B cell (primary cell): ENCODE measurements at regions of chr20 and their contacts with region 1.

Region 1: GRCh38 chr20:34302723-34303528 is at the start of gene AHCY:
- DNase-seq: peak; percentile 96
- ATAC-seq: peak; percentile 92
- H3K4me3 ChIP-seq: peak within 1 kb of the TSS; percentile 65 to 93 (median 85)
- H3K4me3 Mint-ChIP-seq: peak within 1 kb of the TSS; percentile 97
- H3K27ac ChIP-seq: peak within 1 kb of the TSS; percentile 75 to 87
- H3K27ac Mint-ChIP-seq: peak within 1 kb of the TSS; percentile 95
- H3K4me1 ChIP-seq: peaks cover 4 to 18% of the 10 kb centered on the region in 2 donors
- H3K4me1 Mint-ChIP-seq: peaks cover 19% of the 10 kb centered on the region
- H3K27me3 ChIP-seq: no peaks in the 10 kb centered on the region
- H3K27me3 Mint-ChIP-seq: no peaks in the 10 kb centered on the region
- CTCF ChIP-seq: peak; percentile 13
- total RNA-seq, gene AHCY: 43.6 and 43.8 TPM in 2 replicates

Region 2: DNA sequence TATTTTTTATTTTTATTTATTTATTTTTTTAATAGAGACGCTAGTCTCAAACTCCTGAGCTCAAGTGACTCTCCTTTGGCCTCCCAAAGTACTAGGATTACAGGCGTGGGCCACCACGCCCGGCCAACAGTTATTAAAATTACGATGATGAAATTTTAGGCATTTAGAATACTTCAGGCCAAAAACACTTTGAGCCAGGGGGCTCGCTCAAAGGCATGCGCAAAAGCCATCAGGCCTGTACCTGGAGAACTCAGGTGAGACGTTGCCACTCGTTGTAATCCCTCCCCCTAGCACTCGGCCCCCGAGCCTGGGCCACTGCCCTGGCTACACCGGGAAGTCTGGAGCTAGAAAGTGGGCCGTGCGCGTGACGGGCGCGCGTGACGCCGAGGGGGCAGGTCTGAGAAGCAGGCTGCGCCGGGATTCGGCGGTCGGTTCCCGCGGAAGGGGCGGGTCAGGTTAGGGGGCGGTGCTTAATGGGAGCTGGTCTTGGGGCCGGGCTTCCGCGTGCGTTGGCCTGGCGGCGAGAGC is 813.4 kb before region 1 on chr20:
- CTCF ChIA-PET with region 1: no interaction called
- POLR2A ChIA-PET with region 1: no interaction called
- intact Hi-C with region 1: loop called (anchors 5 kb)
- DNase-seq: peak; percentile 99
- ATAC-seq: peak; percentile 97
- H3K4me3 ChIP-seq: peak overlapping the region; percentile 24 to 73 (median 68)
- H3K4me3 Mint-ChIP-seq: peak overlapping the region; percentile 93
- H3K27ac ChIP-seq: peak overlapping the region; percentile 97 to 99
- H3K27ac Mint-ChIP-seq: peak overlapping the region; percentile 95
- H3K4me1 ChIP-seq: peaks cover 9 to 19% of the 10 kb centered on the region in 2 donors
- H3K4me1 Mint-ChIP-seq: peaks cover 16% of the 10 kb centered on the region
- H3K27me3 ChIP-seq: no peaks in the 10 kb centered on the region
- H3K27me3 Mint-ChIP-seq: no peaks in the 10 kb centered on the region
- CTCF ChIP-seq: no peak

Region 3: DNA sequence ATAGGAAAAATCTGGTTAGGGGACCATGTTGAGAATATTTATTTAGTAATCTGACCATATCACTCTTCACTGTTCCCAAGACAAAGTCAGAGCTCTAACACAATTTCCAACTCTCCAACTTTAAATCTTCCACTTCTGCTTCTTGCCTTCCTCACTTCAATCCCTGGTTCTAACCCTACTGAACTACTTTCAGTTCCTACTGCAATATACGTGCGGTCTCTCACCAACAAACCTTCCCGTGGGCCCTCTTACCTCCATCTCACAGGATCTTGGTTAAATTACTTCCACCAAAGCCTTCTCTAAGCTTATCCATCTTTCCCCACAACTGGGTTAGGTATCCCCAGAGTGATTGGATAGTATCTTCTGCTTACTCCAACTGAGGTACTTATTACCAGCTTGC is 198.9 kb before region 1 on chr20:
- CTCF ChIA-PET with region 1: no interaction called
- POLR2A ChIA-PET with region 1: no interaction called
- intact Hi-C with region 1: no loop called
- DNase-seq: no peak
- ATAC-seq: no peak
- H3K4me3 ChIP-seq: no peak overlapping the region
- H3K4me3 Mint-ChIP-seq: no peak overlapping the region
- H3K27ac ChIP-seq: peak overlapping the region in 1 of 2 donors; percentile 34
- H3K27ac Mint-ChIP-seq: no peak overlapping the region
- H3K4me1 ChIP-seq: peaks cover 6 to 14% of the 10 kb centered on the region in 2 donors
- H3K4me1 Mint-ChIP-seq: peaks cover 35% of the 10 kb centered on the region
- H3K27me3 ChIP-seq: no peaks in the 10 kb centered on the region
- H3K27me3 Mint-ChIP-seq: no peaks in the 10 kb centered on the region
- CTCF ChIP-seq: no peak

Region 4: GRCh38 chr20:34324541-34324940 is 21.6 kb after region 1 on chr20:
- CTCF ChIA-PET with region 1: no interaction called
- POLR2A ChIA-PET with region 1: no interaction called
- intact Hi-C with region 1: no loop called
- DNase-seq: no peak
- ATAC-seq: no peak
- H3K4me3 ChIP-seq: no peak overlapping the region
- H3K4me3 Mint-ChIP-seq: no peak overlapping the region
- H3K27ac ChIP-seq: no peak overlapping the region
- H3K27ac Mint-ChIP-seq: no peak overlapping the region
- H3K4me1 ChIP-seq: no peaks in the 10 kb centered on the region
- H3K4me1 Mint-ChIP-seq: no peaks in the 10 kb centered on the region
- H3K27me3 ChIP-seq: peaks cover 0 to 3% (median 1%) of the 10 kb centered on the region in 4 experiments
- H3K27me3 Mint-ChIP-seq: peaks cover 14% of the 10 kb centered on the region
- CTCF ChIP-seq: no peak

Region 5: GRCh38 chr20:34363062-34363464 is 60.1 kb after region 1 on chr20 and contains the start of gene ITCH:
- CTCF ChIA-PET with region 1: no interaction called
- POLR2A ChIA-PET with region 1: no interaction called
- intact Hi-C with region 1: loop called (anchors 1 kb)
- DNase-seq: peak; percentile 94
- ATAC-seq: peak; percentile 96
- H3K4me3 ChIP-seq: peak within 1 kb of the TSS; percentile 46 to 91 (median 88)
- H3K4me3 Mint-ChIP-seq: peak within 1 kb of the TSS; percentile 97
- H3K27ac ChIP-seq: peak within 1 kb of the TSS; percentile 81 to 96
- H3K27ac Mint-ChIP-seq: peak within 1 kb of the TSS; percentile 98
- H3K4me1 ChIP-seq: peaks cover 34 to 38% of the 10 kb centered on the region in 2 donors
- H3K4me1 Mint-ChIP-seq: peaks cover 35% of the 10 kb centered on the region
- H3K27me3 ChIP-seq: no peaks in the 10 kb centered on the region
- H3K27me3 Mint-ChIP-seq: no peaks in the 10 kb centered on the region
- CTCF ChIP-seq: no peak
- total RNA-seq, gene ITCH: 89.6 and 110 TPM in 2 replicates

Region 6: DNA sequence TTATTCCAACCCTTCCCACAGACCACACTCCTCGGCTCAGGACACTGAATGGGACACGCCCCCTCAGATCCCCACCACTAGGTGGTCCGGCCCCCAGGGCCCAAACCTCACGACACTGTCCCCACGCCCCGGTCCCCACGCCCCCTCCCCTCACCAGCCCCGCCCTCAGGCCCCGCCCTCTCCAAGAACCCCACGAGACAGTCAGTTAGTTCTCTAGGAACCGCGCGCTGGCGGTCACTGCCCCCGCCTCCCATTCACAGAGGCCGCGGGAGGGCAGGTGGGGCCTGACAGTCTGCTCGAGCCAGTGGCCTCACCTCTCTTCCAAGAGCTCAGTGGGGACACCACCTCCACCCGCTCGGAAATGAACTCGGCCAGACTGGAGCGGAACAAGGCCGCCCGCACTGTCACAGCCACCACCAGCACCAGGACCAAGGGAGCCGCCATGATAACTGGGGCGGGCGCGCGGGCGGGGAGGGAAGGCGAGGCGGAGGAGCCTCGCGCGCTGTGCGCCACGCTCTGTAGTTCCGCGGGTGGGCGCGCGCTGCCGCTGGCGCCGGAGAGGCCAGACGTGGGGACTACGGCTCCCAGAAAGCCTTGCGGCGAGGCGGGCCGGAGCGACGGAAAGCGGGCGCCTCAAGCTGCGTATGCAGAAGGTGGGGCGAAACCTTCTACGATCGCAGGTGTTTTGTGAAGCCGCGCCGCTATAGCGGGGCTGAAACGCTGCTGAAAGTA is 373.9 kb after region 1 on chr20 and contains the start of gene PIGU:
- CTCF ChIA-PET with region 1: no interaction called
- POLR2A ChIA-PET with region 1: no interaction called
- intact Hi-C with region 1: loop called (anchors 1 kb)
- DNase-seq: peak; percentile 98
- ATAC-seq: peak; percentile 93
- H3K4me3 ChIP-seq: peak within 1 kb of the TSS; percentile 74 to 96 (median 78)
- H3K4me3 Mint-ChIP-seq: peak within 1 kb of the TSS; percentile 98
- H3K27ac ChIP-seq: peak within 1 kb of the TSS; percentile 74 to 86
- H3K27ac Mint-ChIP-seq: peak within 1 kb of the TSS; percentile 95
- H3K4me1 ChIP-seq: peaks cover 11 to 12% of the 10 kb centered on the region in 2 donors
- H3K4me1 Mint-ChIP-seq: peaks cover 17% of the 10 kb centered on the region
- H3K27me3 ChIP-seq: no peaks in the 10 kb centered on the region
- H3K27me3 Mint-ChIP-seq: no peaks in the 10 kb centered on the region
- CTCF ChIP-seq: no peak
- total RNA-seq, gene PIGU: 15.4 and 19.3 TPM in 2 replicates

Region 7: GRCh38 chr20:34825530-34826362 is 522.8 kb after region 1 on chr20 and contains the start of gene NCOA6:
- CTCF ChIA-PET with region 1: no interaction called
- POLR2A ChIA-PET with region 1: no interaction called
- intact Hi-C with region 1: loop called (anchors 2 kb)
- DNase-seq: peak; percentile 88
- ATAC-seq: peak; percentile 74
- H3K4me3 ChIP-seq: peak within 1 kb of the TSS; percentile 68 to 94 (median 82)
- H3K4me3 Mint-ChIP-seq: peak within 1 kb of the TSS; percentile 94
- H3K27ac ChIP-seq: peak within 1 kb of the TSS; percentile 60 to 67
- H3K27ac Mint-ChIP-seq: peak within 1 kb of the TSS; percentile 92
- H3K4me1 ChIP-seq: peaks cover 19 to 21% of the 10 kb centered on the region in 2 donors
- H3K4me1 Mint-ChIP-seq: peaks cover 31% of the 10 kb centered on the region
- H3K27me3 ChIP-seq: no peaks in the 10 kb centered on the region
- H3K27me3 Mint-ChIP-seq: peaks cover 3% of the 10 kb centered on the region
- CTCF ChIP-seq: no peak
- total RNA-seq, gene NCOA6: 31.0 and 31.9 TPM in 2 replicates

Region 8: GRCh38 chr20:35284267-35284991 is 981.5 kb after region 1 on chr20 and contains the start of gene EIF6:
- CTCF ChIA-PET with region 1: no interaction called
- POLR2A ChIA-PET with region 1: no interaction called
- intact Hi-C with region 1: loop called (anchors 2 kb)
- DNase-seq: peak; percentile 83
- ATAC-seq: peak; percentile 92
- H3K4me3 ChIP-seq: peak within 1 kb of the TSS; percentile 59 to 97 (median 93)
- H3K4me3 Mint-ChIP-seq: peak within 1 kb of the TSS; percentile 95
- H3K27ac ChIP-seq: peak within 1 kb of the TSS; percentile 71 to 90
- H3K27ac Mint-ChIP-seq: peak within 1 kb of the TSS; percentile 96
- H3K4me1 ChIP-seq: peaks cover 13 to 19% of the 10 kb centered on the region in 2 donors
- H3K4me1 Mint-ChIP-seq: peaks cover 32% of the 10 kb centered on the region
- H3K27me3 ChIP-seq: no peaks in the 10 kb centered on the region
- H3K27me3 Mint-ChIP-seq: no peaks in the 10 kb centered on the region
- CTCF ChIP-seq: no peak
- total RNA-seq, gene EIF6: 74.0 and 81.2 TPM in 2 replicates